ENCODE measurements at regions of chr13 and their contacts with region 1.

Region 1: DNA sequence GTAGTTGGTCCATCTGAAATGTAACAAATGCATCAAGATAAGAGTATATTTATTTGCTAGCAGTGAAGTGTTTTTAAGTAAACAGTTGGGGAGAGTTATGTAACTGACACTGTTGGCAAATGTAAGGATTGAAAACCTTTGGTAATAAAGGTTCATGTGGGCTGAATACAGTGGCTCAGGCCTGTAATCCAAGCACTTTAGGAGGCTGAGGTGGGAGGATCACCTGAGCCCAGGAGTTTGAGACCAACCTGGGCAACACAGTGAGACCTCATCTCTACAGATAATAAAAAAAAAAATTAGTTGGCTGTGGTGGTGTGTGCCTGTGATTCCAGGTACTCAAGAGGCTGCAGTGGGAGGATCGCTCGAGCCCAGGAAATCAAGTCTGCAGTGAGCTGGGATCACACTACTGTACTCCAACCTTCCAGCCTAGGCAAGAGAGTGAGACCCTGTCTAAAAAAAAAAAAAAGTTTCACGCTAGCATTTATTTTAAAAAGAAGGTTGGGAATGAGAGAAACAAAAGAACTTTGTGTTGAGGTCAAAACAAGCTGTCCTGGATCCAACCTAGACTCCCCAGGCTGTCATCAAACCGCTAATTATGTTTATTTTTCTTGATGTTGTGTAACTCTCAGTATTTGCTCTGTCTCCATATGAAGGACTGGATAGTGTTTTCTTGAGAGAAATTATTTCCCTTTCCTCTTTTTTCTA is 20.7 kb downstream of the SETDB2 start:
- DNase-seq: no peak
- H3K4me3 ChIP-seq: no peak overlapping the region
- H3K27ac ChIP-seq: no peak overlapping the region
- H3K27me3 ChIP-seq: no peaks in the 10 kb centered on the region
- CTCF ChIP-seq: no peak

Region 2: GRCh38 chr13:49419276-49419675 is 45.5 kb before region 1 on chr13:
- CTCF ChIA-PET with region 1: no interaction called
- POLR2A ChIA-PET with region 1: no interaction called
- DNase-seq: no peak
- H3K4me3 ChIP-seq: no peak overlapping the region
- H3K27ac ChIP-seq: no peak overlapping the region
- H3K27me3 ChIP-seq: no peaks in the 10 kb centered on the region
- CTCF ChIP-seq: no peak

Region 3: GRCh38 chr13:49527123-49527522 is 62.4 kb after region 1 on chr13:
- CTCF ChIA-PET with region 1: interaction called, 11 read pairs
- POLR2A ChIA-PET with region 1: no interaction called
- DNase-seq: no peak
- H3K4me3 ChIP-seq: no peak overlapping the region
- H3K27ac ChIP-seq: no peak overlapping the region
- H3K27me3 ChIP-seq: no peaks in the 10 kb centered on the region
- CTCF ChIP-seq: no peak

Measured in AG04450 (cell line).